Activated T-helper 1 cell treated with anti-CD3 and anti-CD28 coated beads, Interleukin-12 subunit alpha, Interleukin-12 subunit beta, Interleukin-2, Interleukin-4 antibody, amounts not matched to agents 30 ng/mL and 10 ng/mL and 1 ng/mL, durations not matched to agents 14 hours and 24 hours and 36 hours (primary cell): ENCODE measurements at regions of chr2 and their contacts with region 1.

Region 1: DNA sequence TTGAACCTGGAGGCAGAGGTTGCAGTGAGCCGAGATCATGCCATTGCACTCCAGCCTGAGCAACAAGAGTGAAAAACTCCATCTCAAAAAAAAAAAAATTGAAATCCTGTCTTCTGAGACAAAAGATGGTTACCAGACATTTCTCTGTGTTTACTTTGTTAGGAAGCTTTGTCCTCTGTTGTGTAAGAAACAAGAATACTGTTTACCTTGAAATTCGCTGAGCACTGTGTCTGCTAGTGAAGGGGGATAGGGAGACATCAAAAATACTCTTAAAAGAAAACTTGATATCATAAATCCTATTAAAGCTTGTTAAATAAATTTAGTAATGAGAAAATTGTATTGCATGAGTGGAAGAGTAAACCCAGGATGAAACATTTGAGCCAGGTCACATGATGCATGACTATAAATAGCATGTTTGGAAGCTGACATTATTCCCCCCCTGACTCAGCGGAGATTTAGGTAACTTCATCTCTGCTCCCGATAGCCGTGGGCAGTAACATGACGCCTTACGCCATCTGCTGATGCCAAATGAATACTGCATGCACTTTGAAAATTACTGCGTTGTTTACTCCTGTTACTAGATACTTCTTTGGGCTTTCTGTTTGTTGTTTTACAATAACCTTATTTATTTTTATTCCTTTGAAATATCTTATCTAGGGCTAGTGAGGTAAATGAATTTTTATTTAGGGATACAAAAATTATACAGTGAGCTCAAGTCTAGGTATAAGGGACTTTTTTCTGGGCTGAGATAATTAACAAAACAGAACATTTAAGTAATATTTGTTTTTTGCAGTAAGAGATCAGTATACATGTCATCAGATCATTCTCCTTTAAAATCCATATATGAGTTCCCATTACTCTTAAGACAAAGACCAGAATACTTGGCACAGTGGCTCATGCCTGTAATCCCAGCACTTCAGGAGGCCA is 134.9 kb downstream of the MAP3K20 start:
- DNase-seq: peak; percentile 41
- H3K4me3 Mint-ChIP-seq: no peak overlapping the region
- H3K27ac Mint-ChIP-seq: no peak overlapping the region
- H3K4me1 Mint-ChIP-seq: peaks cover 6% of the 10 kb centered on the region
- H3K27me3 Mint-ChIP-seq: no peaks in the 10 kb centered on the region

Region 2: GRCh38 chr2:172972005-172972619 is 238.4 kb before region 1 on chr2:
- intact Hi-C with region 1: loop called (anchors 1 kb)
- DNase-seq: no peak
- H3K4me3 Mint-ChIP-seq: no peak overlapping the region
- H3K27ac Mint-ChIP-seq: no peak overlapping the region
- H3K4me1 Mint-ChIP-seq: peaks cover 16% of the 10 kb centered on the region
- H3K27me3 Mint-ChIP-seq: peaks cover 12% of the 10 kb centered on the region

Region 3: GRCh38 chr2:173027181-173028128 is 183.1 kb before region 1 on chr2:
- intact Hi-C with region 1: loop called (anchors 1 kb)
- DNase-seq: peak; percentile 57
- H3K4me3 Mint-ChIP-seq: no peak overlapping the region
- H3K27ac Mint-ChIP-seq: no peak overlapping the region
- H3K4me1 Mint-ChIP-seq: no peaks in the 10 kb centered on the region
- H3K27me3 Mint-ChIP-seq: peaks cover 11% of the 10 kb centered on the region

Region 4: DNA sequence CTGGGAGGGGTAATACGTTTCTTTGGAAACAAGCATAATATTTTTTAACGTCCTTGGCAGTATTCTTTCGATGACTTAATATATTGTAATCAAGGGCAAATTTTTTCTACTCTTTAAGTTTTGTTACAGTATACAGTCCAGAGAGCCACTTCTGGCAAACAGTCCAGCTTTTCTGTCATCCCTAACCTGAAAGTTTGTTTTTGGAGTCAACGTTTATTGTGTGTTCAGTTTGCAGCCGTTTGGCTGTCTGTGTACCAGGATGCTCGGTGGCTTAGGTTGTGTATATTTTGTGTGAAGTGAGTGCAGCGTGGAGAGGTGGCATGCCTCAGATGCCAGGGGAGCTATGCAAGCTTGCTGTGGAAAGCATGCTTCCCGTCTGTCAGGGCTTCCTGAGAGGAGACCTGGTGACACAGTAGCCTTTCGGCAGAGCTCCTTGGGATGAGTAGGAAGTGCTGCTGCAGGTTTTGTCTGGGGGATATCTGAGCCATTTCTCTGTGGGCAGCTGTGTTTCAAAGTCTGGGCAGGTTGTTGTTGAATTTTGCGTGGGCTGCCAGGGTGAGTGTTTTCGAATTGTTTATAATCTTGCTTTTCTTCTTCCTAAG is 120.2 kb before region 1 on chr2:
- intact Hi-C with region 1: loop called (anchors 5 kb)
- DNase-seq: no peak
- H3K4me3 Mint-ChIP-seq: no peak overlapping the region
- H3K27ac Mint-ChIP-seq: no peak overlapping the region
- H3K4me1 Mint-ChIP-seq: no peaks in the 10 kb centered on the region
- H3K27me3 Mint-ChIP-seq: no peaks in the 10 kb centered on the region